H1 (cell line): ENCODE measurements at regions of chr9 and their contacts with region 1.

Region 1: DNA sequence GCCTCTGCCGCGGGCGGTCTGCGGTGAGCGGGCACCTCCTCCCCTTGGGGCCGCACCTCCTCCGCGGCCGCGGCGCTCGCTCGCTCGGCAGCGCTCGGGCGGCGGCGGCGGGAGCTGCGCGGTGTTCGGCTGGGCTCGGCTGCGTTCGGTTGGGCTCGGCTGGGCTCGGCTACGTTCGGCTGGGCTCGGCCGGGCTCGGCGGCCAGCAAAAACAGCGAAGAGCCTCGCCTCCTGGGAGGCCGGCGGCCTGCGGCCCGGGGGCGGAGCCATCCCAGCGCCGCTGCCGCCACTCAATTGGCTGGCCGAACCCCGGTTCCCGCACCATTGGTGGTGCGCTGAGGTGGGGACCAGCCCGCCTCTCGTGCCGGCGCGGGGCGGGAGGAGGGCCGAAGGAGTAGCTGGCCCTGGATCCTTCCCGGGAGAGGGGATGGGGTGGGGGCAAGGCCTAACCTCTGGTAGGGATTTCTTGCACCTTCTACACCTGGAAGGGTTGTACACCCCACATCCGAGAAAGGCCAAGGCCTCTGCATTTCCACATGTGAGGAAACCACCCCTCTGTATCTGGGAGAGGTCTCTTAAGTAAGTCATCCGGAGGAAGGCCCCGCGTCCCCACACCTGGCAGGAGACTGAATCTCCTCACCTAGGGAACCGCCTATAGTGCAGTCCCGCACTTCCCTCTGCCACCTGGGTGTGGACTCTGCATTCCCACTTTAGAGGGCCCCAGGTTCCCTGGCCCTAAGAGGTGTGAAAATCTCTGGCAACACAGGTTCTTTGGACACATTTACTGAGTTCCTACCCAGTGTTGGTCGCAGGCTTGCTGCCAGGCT is at the start of gene ENHO:
- DNase-seq: peak; percentile 82 to 99
- H3K4me3 ChIP-seq: peak within 1 kb of the TSS; percentile 56 to 78 (median 64)
- H3K27ac ChIP-seq: no peak within 1 kb of the TSS
- H3K4me1 ChIP-seq: peaks cover 0 to 17% (median 8%) of the 10 kb centered on the region in 4 experiments; a peak in 6 of 7 replicates
- H3K27me3 ChIP-seq: peaks cover 1 to 14% (median 11%) of the 10 kb centered on the region in 4 experiments; a peak in 6 of 7 replicates
- CTCF ChIP-seq: no peak
- EP300 ChIP-seq: no peak
- POLR2A ChIP-seq: 0 out of 3 replicates have a peak, but pooled peaks of 1 of the 2 experiments have one; percentile 38
- RAD21 ChIP-seq: no peak
- total RNA-seq, gene ENHO: 12.2 and 14.1 TPM in 2 replicates

Region 2: GRCh38 chr9:34363619-34364351 is 159.4 kb before region 1 on chr9:
- CTCF ChIA-PET with region 1: no interaction called
- POLR2A ChIA-PET with region 1: no interaction called
- DNase-seq: peak in 1 of 2 experiments; percentile 52
- H3K4me3 ChIP-seq: peak overlapping the region in 3 of 4 experiments; percentile 7 to 42 (median 19); a peak in 4 of 8 replicates
- H3K27ac ChIP-seq: no peak overlapping the region
- H3K4me1 ChIP-seq: peaks cover 9 to 19% (median 11%) of the 10 kb centered on the region in 4 experiments; a peak in 6 of 7 replicates
- H3K27me3 ChIP-seq: no peaks in the 10 kb centered on the region
- CTCF ChIP-seq: no peak
- EP300 ChIP-seq: no peak
- POLR2A ChIP-seq: no peak
- RAD21 ChIP-seq: no peak

Region 3: GRCh38 chr9:34430843-34431437 is 92.2 kb before region 1 on chr9:
- CTCF ChIA-PET with region 1: interaction called, 11 read pairs
- POLR2A ChIA-PET with region 1: no interaction called
- DNase-seq: peak; percentile 34 to 69
- H3K4me3 ChIP-seq: no peak overlapping the region
- H3K27ac ChIP-seq: no peak overlapping the region
- H3K4me1 ChIP-seq: no peaks in the 10 kb centered on the region
- H3K27me3 ChIP-seq: no peaks in the 10 kb centered on the region
- CTCF ChIP-seq: no peak
- EP300 ChIP-seq: no peak
- POLR2A ChIP-seq: no peak
- RAD21 ChIP-seq: peak in 1 of 2 experiments; percentile 8; a peak in 1 of 4 replicates

Region 4: DNA sequence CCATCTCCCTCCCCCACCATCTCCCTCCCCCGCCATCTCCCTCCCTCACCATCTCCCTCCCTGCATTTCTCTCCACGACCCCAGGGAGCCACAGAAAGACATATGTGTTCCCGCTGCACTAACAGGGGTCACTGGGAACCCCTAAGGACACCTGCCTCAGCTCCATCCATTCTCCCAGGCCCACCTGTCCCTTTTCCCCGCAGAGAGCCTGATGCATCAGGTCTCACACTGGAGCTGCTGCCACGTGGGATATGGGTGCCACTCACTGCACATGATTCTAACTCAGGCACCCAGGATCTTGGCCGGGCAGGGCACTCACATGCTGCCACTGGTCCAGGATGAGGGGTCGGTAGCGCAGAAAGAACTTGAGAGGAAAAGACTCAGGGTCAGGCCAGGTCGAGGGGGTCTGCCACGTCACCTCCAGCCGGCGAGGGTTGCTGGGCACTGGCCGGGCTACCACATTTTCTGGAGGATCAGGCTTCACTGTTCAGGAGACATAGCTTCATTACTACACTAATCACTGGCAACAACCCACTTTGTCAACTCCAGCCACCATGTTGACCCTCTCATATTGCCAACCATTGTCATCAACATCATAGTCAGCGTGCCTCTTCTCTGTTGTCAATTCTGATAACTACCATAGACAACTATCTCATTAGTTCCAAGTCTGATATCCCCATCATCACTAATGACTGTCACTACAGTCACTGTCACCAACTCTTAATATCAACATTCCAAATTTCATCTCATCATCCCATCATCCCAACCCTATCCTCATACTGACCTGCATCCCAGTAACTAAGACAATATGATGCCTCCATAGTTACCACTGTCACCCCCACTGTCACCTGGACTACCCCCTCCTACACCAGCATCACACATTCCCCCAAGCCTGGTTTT is 33.0 kb after region 1 on chr9:
- CTCF ChIA-PET with region 1: no interaction called
- POLR2A ChIA-PET with region 1: no interaction called
- DNase-seq: peak in 1 of 2 experiments; percentile 39
- H3K4me3 ChIP-seq: no peak overlapping the region
- H3K27ac ChIP-seq: no peak overlapping the region
- H3K4me1 ChIP-seq: peaks cover 10 to 29% (median 23%) of the 10 kb centered on the region in 4 experiments
- H3K27me3 ChIP-seq: no peaks in the 10 kb centered on the region
- CTCF ChIP-seq: no peak
- EP300 ChIP-seq: no peak
- POLR2A ChIP-seq: no peak
- RAD21 ChIP-seq: no peak